Panc1 (cell line): ENCODE measurements at regions of chr10 and their contacts with region 1.

Region 1: DNA sequence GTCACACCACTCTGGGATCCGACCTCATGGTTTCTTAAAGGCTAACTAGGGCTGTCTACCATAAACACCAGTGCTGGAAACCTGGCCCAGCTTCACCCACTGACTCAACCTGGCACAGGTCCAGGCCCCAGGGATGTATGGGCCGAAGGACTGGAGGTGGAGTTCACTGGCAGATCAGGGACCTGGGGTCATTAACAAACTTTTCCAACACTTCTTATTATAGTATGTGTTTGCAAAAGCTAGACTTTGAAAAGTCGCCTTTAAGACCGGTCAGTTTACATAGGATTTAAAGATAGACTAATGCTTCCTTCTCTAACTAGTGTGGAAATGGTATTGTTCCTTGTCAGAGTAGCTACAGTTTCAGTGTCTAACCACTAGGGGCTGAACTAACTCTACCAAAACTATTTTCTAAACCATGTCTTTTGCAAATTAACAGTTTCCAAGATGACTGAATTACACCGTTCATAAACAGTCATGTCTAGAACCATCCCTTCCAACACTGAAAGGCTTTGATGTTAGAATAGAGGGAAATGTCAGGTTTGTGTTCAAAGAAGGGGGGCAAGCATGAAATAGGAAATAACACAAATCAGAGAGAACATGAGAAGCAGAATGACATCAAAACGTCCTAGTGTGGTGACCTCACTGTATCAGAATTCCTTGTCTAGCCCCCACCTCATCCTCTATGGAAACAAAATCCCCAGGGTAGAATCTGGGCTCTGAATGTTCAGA is 29.7 kb downstream of the STN1 start:
- DNase-seq: peak; percentile 75
- ATAC-seq: peak; percentile 75
- H3K4me3 ChIP-seq: no peak overlapping the region
- H3K27ac ChIP-seq: no peak overlapping the region; the same call in 1 of the 2 replicates
- H3K4me1 ChIP-seq: peaks cover 7% of the 10 kb centered on the region; the same call in 1 of the 2 replicates
- H3K27me3 ChIP-seq: no peaks in the 10 kb centered on the region
- CTCF ChIP-seq: peak; percentile 89

Region 2: DNA sequence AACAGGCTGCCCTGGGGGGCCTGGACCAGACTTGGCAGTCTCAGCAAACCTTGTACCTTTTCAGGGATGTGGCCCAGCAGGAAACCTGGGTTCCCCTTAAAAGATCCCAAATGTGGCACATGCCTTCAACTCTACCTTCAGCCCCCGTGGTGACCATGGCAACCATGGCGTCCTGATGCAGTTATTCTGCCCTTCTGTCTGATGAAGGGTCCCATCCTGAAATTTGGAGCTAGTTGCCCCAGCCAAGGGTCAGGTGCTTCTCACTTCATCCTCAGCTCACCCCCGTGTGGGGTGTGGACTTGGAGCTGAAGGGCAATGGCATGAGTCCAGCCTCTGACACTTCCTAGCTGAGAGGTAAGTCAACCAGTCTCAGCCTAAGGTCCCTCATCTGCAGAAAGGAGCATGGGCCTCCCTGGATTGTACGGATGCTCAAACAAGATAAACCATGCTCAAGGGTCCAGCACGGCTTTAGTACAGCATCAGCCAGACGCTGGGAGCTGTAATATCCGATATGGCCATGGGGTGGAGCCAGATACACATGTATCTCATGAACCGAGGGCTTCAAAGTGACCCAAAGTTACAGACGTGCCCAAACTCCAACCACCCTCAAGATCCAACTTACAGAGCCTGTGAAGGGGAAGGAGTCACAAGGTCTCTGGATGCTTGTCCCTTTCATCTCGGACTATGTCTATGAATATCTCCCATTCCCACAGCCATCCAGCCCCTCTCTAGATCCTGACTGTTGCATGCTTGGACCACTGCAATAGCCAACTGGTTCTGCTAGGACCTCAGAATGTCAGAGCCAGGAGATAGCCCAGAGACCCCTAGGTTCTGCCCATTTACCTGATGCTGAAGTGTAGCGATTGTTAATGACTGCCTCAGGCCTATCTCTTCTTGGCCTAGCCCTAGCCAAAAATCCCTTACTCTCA is 175.4 kb before region 1 on chr10:
- CTCF ChIA-PET with region 1: interaction called, 9 read pairs
- POLR2A ChIA-PET with region 1: interaction called, 5 read pairs
- in situ Hi-C with region 1: no loop called
- intact Hi-C with region 1: loop called (anchors 1 kb)
- DNase-seq: peak; percentile 67
- ATAC-seq: peak; percentile 84
- H3K4me3 ChIP-seq: no peak overlapping the region
- H3K27ac ChIP-seq: no peak overlapping the region
- H3K4me1 ChIP-seq: peaks cover 4% of the 10 kb centered on the region; the same call in 1 of the 2 replicates
- H3K27me3 ChIP-seq: no peaks in the 10 kb centered on the region
- CTCF ChIP-seq: peak; percentile 91

Region 3: GRCh38 chr10:103966671-103967447 is 78.6 kb after region 1 on chr10 and contains the start of gene SLK:
- CTCF ChIA-PET with region 1: interaction called, 5 read pairs
- POLR2A ChIA-PET with region 1: no interaction called
- in situ Hi-C with region 1: no loop called
- intact Hi-C with region 1: loop called (anchors 5 kb)
- DNase-seq: peak; percentile 24
- ATAC-seq: peak; percentile 90
- H3K4me3 ChIP-seq: peak within 1 kb of the TSS; percentile 95 to 99
- H3K27ac ChIP-seq: peak within 1 kb of the TSS; percentile 97
- H3K4me1 ChIP-seq: peaks cover 16% of the 10 kb centered on the region
- H3K27me3 ChIP-seq: no peaks in the 10 kb centered on the region
- CTCF ChIP-seq: no peak
- total RNA-seq, gene SLK: 40.8 TPM

Region 4: GRCh38 chr10:104121520-104122224 is 233.4 kb after region 1 on chr10 and contains the start of gene SFR1:
- CTCF ChIA-PET with region 1: no interaction called
- POLR2A ChIA-PET with region 1: no interaction called
- in situ Hi-C with region 1: no loop called
- intact Hi-C with region 1: loop called (anchors 2 kb)
- DNase-seq: peak; percentile 90
- ATAC-seq: peak; percentile 95
- H3K4me3 ChIP-seq: peak within 1 kb of the TSS; percentile 83 to 89
- H3K27ac ChIP-seq: peak within 1 kb of the TSS; percentile 93
- H3K4me1 ChIP-seq: peaks cover 24% of the 10 kb centered on the region
- H3K27me3 ChIP-seq: no peaks in the 10 kb centered on the region
- CTCF ChIP-seq: peak; percentile 93
- total RNA-seq, gene SFR1: 8.4 TPM